Endothelial cell of umbilical vein (primary cell): ENCODE measurements at regions of chr17 and their contacts with region 1.

Region 1: GRCh38 chr17:80426681-80427326 is 11.8 kb downstream of the ENDOV start:
- DNase-seq: peak; percentile 54
- H3K4me3 ChIP-seq: no peak overlapping the region
- H3K27ac ChIP-seq: no peak overlapping the region
- H3K4me1 ChIP-seq: no peaks in the 10 kb centered on the region
- H3K27me3 ChIP-seq: no peaks in the 10 kb centered on the region
- CTCF ChIP-seq: peak; percentile 98
- POLR2A ChIP-seq: no peak

Region 2: DNA sequence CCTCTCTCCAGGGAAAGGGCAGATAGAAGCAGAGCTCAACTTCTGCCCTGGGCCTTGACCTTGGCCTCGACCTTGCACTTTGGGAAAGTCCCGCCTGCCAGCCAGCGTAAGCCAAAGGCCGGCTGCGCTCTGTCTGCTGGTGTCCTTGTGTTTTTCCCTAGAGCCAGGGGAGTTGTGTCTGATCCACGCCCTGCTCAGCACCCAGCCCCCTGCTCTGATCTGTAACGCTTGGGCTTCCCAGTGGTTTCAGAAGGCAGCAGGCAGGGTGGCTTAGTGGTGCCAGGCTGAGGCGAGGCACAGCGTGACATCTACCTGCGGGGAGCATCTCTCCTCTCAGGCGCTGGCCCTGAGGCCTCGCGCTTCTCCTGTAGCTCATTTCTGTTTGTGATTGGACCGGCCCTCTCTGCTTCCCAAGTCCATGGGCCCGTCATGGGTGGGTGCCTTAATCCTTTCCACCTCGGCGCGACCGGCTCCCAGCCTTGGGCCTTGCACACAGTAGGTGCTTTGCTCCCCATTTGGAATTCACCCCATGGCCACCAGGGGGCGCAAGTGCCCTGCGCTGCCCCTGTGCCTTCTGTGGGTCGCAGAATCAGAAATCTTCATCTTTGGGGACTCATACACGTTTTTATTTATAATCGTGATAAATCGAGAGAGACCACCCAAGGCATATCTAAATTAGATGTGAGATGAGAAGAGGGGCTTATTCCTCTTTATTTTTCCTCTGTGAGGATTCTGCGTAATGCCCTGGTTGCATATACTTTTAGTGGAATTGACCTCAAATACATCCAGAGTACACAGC is 230.9 kb before region 1 on chr17:
- CTCF ChIA-PET with region 1: interaction called, 15 read pairs
- POLR2A ChIA-PET with region 1: no interaction called
- dilution Hi-C with region 1: no loop called
- intact Hi-C with region 1: no loop called
- DNase-seq: peak; percentile 24
- H3K4me3 ChIP-seq: no peak overlapping the region
- H3K27ac ChIP-seq: no peak overlapping the region
- H3K4me1 ChIP-seq: no peaks in the 10 kb centered on the region
- H3K27me3 ChIP-seq: peaks cover 0 to 5% of the 10 kb centered on the region in 2 experiments
- CTCF ChIP-seq: peak; percentile 89 to 92
- POLR2A ChIP-seq: no peak

Region 3: DNA sequence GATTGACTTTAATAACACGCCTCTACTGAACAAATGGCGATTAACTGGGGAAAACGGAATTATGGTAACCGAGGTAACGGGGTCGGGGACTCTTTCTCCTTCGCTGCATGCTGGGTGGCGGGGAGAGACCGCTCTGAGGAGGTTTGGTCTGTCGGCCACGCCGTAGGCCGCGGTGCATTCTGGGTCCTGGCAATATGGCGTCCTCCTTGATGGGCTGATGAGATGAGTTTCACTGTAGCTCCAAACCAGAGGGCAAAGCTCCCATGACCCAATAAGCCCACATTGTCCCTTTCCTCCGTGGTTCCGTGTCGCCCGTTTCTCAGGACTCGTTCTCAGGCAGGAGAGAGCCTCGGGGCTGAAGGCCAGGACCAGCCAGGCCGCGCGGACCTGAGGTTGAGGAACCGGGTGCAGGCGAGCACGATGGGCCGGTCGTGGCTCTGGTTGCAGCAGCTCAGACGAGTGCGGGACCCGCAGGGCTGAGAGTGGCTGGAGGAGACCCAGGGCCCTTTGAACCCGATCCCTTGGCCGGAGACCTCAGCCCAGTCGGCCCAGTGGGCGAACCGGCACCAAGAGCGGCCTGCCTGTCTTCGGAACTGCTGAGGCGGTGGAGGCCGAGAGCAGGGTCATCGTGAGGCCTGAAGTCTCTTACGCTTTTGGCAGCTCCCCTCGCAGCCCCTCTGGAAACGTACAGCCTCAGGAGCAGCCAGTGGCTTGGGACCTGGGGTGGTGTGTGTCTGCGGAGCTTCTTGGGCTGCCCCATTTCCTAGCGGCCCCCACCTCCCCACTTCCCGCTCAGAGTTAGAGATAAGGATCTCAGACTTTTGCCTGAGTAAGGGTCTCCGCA is 118.1 kb after region 1 on chr17 and contains the start of gene RPTOR:
- CTCF ChIA-PET with region 1: no interaction called
- POLR2A ChIA-PET with region 1: no interaction called
- dilution Hi-C with region 1: no loop called
- intact Hi-C with region 1: no loop called
- DNase-seq: peak; percentile 95
- H3K4me3 ChIP-seq: peak within 1 kb of the TSS; percentile 72 to 86 (median 78)
- H3K27ac ChIP-seq: peak within 1 kb of the TSS; percentile 76
- H3K4me1 ChIP-seq: peaks cover 12% of the 10 kb centered on the region
- H3K27me3 ChIP-seq: no peaks in the 10 kb centered on the region
- CTCF ChIP-seq: no peak
- POLR2A ChIP-seq: peak; percentile 63
- total RNA-seq, gene RPTOR: 37.0 and 41.8 TPM in 2 replicates

Region 4: GRCh38 chr17:80575057-80575875 is 148.5 kb after region 1 on chr17:
- CTCF ChIA-PET with region 1: interaction called, 53 read pairs
- POLR2A ChIA-PET with region 1: no interaction called
- dilution Hi-C with region 1: no loop called
- intact Hi-C with region 1: loop called (anchors 1 kb)
- DNase-seq: peak; percentile 87
- H3K4me3 ChIP-seq: no peak overlapping the region
- H3K27ac ChIP-seq: no peak overlapping the region
- H3K4me1 ChIP-seq: no peaks in the 10 kb centered on the region
- H3K27me3 ChIP-seq: no peaks in the 10 kb centered on the region
- CTCF ChIP-seq: peak; percentile 100
- POLR2A ChIP-seq: no peak

Region 5: DNA sequence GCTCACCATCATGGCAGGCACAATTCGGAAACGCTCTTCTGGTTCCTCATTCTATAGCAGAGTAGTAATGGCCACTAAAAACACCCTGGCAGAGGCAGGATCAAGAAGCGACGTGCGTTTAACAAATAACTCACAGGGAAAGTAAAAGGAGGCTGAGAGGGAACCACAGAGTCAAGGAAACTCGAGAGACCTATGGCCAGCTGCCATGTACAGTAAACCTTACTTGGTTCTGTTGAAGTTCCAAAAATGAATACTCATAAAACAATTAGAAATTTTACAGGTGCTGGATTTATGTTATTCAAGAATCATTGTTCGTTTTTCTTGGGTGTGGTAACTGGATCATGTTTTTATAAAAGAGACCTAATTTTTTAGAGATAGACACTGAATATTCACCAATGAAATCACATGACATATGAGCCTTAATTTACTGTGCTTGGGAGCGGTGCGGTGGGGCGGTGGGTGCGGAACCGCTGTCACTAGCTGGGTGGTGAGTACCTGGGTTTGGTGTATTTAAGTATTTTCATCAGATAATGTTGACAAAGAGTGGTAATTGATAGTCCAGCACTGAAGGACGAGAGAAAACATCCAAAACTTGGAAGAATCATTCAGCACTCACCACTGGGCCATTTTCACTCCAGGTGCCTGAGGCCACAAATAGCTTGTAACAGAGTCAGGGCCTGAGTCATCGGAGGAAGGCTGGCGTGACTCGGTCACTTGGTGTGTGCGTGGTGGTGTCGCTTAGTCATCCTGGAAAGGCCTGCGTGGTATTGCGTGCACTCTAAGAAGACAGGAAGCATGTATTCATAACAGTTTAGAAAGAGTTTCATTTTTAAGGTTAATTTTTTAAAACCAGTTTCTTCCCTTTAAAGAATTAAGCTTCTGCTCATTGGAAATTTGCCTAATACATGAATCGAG is 429.4 kb after region 1 on chr17:
- CTCF ChIA-PET with region 1: interaction called, 10 read pairs
- POLR2A ChIA-PET with region 1: no interaction called
- dilution Hi-C with region 1: no loop called
- intact Hi-C with region 1: no loop called
- DNase-seq: peak; percentile 95
- H3K4me3 ChIP-seq: no peak overlapping the region
- H3K27ac ChIP-seq: peak overlapping the region; percentile 97
- H3K4me1 ChIP-seq: peaks cover 26% of the 10 kb centered on the region
- H3K27me3 ChIP-seq: no peaks in the 10 kb centered on the region
- CTCF ChIP-seq: no peak
- POLR2A ChIP-seq: no peak

Region 6: DNA sequence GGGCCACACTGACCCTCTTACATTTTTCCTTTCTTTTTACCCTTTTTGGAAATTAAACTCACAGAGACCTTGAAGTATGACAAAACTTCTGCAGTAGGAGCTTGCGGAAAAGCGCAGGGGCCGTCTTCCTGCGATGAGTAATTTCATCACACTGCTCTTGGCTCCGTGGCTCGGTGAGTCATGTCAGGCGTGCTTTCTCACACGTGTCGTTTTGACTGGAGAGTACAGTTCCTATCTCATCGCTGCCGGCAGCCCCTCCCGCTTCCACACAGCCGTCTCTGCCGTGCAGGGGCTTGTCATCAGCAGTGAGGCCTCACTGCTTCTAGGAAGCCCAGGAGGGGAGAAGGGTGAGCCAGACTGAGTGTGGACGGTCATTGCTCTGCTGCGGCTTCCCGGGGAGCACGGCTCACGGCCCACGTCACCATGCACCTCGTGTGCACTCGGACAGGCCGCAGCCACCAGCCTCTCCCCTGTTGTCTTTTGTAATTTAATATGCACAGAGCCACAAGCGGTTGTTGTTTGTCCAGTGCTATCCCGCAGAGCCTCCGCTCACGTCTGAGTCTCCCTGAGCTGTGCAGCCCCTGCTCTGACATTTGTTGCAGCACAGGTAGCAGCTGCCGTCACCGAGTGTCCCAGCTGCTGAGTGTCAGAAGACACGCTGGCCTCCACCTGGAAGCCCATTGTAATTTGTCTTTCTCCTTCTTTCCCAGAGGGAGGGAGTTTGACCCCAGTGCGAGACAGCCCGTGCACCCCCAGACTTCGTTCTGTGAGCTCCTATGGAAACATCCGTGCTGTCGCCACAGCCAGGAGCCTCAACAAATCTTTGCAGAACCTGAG is 465.4 kb after region 1 on chr17:
- CTCF ChIA-PET with region 1: interaction called, 43 read pairs
- POLR2A ChIA-PET with region 1: no interaction called
- dilution Hi-C with region 1: no loop called
- intact Hi-C with region 1: no loop called
- DNase-seq: peak; percentile 91
- H3K4me3 ChIP-seq: no peak overlapping the region
- H3K27ac ChIP-seq: peak overlapping the region; percentile 79
- H3K4me1 ChIP-seq: peaks cover 28% of the 10 kb centered on the region
- H3K27me3 ChIP-seq: no peaks in the 10 kb centered on the region
- CTCF ChIP-seq: no peak
- POLR2A ChIP-seq: no peak

Region 7: DNA sequence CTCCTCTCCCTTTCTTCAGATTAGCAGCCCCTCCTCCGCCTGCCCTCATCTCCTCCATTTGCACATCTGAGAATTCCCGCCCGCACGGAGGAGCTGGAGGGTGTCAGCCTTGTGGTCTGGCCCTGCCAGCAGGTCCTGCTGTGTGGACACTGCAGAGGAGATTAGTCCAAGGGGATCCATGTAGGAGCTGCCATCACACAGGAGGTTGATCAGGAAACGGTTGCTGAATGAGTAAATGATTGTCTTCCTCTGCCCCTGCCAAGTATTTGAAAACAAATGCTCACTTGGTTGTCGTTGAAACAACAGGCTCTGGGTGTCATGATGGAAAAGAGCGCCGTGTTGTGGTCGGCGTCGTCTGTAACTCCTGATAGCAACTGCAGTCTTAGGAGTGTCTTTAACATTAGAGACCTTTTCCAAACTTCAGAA is 501.0 kb after region 1 on chr17:
- CTCF ChIA-PET with region 1: interaction called, 66 read pairs
- POLR2A ChIA-PET with region 1: no interaction called
- dilution Hi-C with region 1: no loop called
- intact Hi-C with region 1: loop called (anchors 1 kb)
- DNase-seq: peak; percentile 96
- H3K4me3 ChIP-seq: no peak overlapping the region
- H3K27ac ChIP-seq: peak overlapping the region; percentile 54
- H3K4me1 ChIP-seq: peaks cover 18% of the 10 kb centered on the region
- H3K27me3 ChIP-seq: no peaks in the 10 kb centered on the region
- CTCF ChIP-seq: peak; percentile 80 to 84
- POLR2A ChIP-seq: no peak

Region 8: GRCh38 chr17:80981062-80981902 is 554.5 kb after region 1 on chr17:
- CTCF ChIA-PET with region 1: interaction called, 41 read pairs
- POLR2A ChIA-PET with region 1: no interaction called
- dilution Hi-C with region 1: no loop called
- intact Hi-C with region 1: loop called (anchors 1 kb)
- DNase-seq: no peak
- H3K4me3 ChIP-seq: no peak overlapping the region
- H3K27ac ChIP-seq: no peak overlapping the region
- H3K4me1 ChIP-seq: no peaks in the 10 kb centered on the region
- H3K27me3 ChIP-seq: no peaks in the 10 kb centered on the region
- CTCF ChIP-seq: peak; percentile 57 to 71
- POLR2A ChIP-seq: no peak